Vagina (tissue), 2 donors: ENCODE measurements at regions of chr1 and their contacts with region 1.

Region 1: GRCh38 chr1:159936273-159936904 is 9.0 kb downstream of the IGSF9 start:
- DNase-seq: no peak
- H3K4me3 ChIP-seq: no peak overlapping the region
- H3K27ac ChIP-seq: no peak overlapping the region
- H3K4me1 ChIP-seq: peaks cover 37% of the 10 kb centered on the region
- H3K27me3 ChIP-seq: no peaks in the 10 kb centered on the region
- CTCF ChIP-seq: peak; percentile 87 to 96 (median 92)
- POLR2A ChIP-seq: no peak

Region 2: DNA sequence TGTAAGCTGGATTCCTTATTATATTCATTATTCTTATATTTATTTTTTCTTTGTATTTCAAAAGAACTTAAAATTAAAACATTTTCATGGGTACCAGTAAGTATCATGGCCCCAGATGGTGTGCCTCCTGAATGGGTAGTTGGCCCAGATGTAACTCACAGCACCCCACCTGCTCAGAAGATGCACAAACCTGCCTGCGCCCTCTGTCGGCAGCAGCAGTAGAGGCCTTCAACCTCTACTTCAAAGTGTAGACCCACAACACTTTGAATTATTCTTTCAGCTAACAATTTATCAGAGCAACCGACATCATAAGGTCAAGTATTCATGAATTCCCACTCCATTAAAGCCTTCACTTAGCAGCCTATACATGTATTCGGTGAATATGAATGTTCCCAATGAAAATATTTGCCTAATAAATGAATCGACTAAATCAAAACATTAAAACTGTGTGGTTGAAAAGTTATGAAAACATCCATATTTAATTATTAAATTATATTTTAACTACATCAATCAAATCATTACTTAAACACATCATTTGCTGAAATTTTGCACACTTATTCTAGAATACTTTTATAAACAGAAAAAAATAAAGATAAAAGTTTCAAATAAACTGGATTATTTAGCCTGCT is 70.0 kb after region 1 on chr1:
- intact Hi-C with region 1: loop called (anchors 2 kb)
- DNase-seq: no peak
- H3K4me3 ChIP-seq: no peak overlapping the region
- H3K27ac ChIP-seq: no peak overlapping the region
- H3K4me1 ChIP-seq: no peaks in the 10 kb centered on the region
- H3K27me3 ChIP-seq: no peaks in the 10 kb centered on the region
- CTCF ChIP-seq: peak in 2 of 3 experiments; percentile 54 to 60
- POLR2A ChIP-seq: no peak

Region 3: DNA sequence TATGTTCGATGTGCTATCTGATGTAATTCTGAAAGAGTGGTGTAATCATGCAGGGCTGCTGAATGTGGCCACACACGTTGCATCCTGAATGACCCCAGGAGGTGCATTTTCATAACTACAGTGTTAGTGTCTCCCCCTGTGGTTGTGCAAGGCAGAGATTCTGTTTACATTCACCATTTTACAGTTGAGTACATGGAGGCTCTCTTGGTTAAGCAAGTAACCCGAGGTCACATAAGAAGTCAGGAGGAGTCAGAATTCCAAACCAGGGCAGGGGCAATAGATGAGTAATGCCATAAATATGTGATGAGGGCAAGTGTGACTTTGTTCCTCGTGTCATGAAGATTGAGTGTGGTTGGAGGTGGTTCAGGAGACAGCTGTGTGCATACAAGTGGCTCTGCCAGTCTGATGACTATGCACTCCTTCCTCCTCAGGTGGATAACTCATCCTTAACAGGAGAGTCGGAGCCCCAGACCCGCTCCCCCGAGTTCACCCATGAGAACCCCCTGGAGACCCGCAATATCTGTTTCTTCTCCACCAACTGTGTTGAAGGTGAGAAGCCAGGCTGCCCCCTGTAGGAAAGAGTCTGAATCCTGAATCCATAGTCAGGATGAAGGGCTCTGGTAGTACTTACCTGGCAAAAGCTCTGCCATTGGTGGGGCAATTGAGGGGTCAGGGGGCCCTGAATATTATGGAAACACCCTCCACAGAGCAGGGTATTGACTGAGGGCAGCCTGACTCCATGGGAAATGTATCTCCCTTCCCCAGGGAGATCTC is 188.5 kb after region 1 on chr1:
- intact Hi-C with region 1: no loop called
- DNase-seq: no peak
- H3K4me3 ChIP-seq: no peak overlapping the region
- H3K27ac ChIP-seq: no peak overlapping the region
- H3K4me1 ChIP-seq: no peaks in the 10 kb centered on the region
- H3K27me3 ChIP-seq: no peaks in the 10 kb centered on the region
- CTCF ChIP-seq: no peak
- POLR2A ChIP-seq: no peak